Colonic mucosa (tissue), 4 donors: ENCODE measurements at regions of chr2 and their contacts with region 1.

Region 1: GRCh38 chr2:230326453-230327417 is at the start of gene SP140L:
- DNase-seq: peak; percentile 87
- H3K4me3 ChIP-seq: peak within 1 kb of the TSS; percentile 31
- H3K27ac ChIP-seq: peak within 1 kb of the TSS; percentile 90
- H3K4me1 ChIP-seq: no peaks in the 10 kb centered on the region
- H3K27me3 ChIP-seq: no peaks in the 10 kb centered on the region
- CTCF ChIP-seq: no peak
- total RNA-seq, gene SP140L: 13.2 to 14.4 TPM

Region 2: GRCh38 chr2:230205034-230205433 is 121.7 kb before region 1 on chr2:
- intact Hi-C with region 1: no loop called
- DNase-seq: no peak
- H3K4me3 ChIP-seq: no peak overlapping the region
- H3K27ac ChIP-seq: no peak overlapping the region
- H3K4me1 ChIP-seq: no peaks in the 10 kb centered on the region
- H3K27me3 ChIP-seq: no peaks in the 10 kb centered on the region
- CTCF ChIP-seq: no peak

Region 3: DNA sequence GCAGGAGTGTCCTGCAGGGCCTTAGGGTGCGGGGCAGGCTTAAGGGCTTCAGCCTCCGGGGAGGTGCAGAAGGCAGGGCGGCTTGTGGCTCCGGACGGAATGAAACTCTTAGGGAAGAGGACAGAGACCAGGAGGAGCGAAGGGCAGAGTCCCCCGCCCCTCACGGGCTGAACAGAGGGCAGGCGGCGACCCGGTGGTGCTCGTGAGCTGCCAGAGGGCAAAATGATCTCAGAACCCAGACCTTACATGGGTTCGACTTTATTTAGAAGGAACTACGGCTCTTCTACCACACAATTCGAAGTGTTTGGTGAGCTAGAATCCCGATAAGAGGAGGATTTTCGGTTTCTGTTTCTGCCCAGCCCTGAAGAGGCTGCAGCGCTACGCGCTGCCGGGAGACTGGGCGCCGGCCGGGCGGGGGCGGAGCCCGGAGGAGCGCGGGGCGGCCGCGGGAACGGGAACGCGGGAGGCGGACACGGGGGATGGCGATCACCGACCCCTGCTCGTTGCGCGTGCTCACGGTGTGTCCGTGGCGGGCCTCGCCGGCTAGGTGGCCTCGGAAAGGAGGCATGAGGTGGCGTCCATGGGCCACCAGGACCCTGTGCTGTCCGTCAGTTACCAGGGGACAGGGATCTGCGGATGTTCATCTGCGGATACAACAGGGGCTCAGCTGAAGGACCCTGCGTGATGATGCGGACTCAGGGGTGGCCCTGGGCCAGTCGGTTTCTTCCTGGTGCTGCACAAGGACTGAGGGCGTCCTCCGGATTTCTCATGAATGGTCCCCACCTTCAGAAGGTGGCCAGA is 85.0 kb after region 1 on chr2:
- intact Hi-C with region 1: loop called (anchors 10 kb)
- DNase-seq: peak; percentile 75
- H3K4me3 ChIP-seq: peak overlapping the region; percentile 65
- H3K27ac ChIP-seq: peak overlapping the region; percentile 92
- H3K4me1 ChIP-seq: peaks cover 4% of the 10 kb centered on the region
- H3K27me3 ChIP-seq: no peaks in the 10 kb centered on the region
- CTCF ChIP-seq: no peak